ENCODE measurements at regions of chrX and their contacts with region 1.

Region 1: DNA sequence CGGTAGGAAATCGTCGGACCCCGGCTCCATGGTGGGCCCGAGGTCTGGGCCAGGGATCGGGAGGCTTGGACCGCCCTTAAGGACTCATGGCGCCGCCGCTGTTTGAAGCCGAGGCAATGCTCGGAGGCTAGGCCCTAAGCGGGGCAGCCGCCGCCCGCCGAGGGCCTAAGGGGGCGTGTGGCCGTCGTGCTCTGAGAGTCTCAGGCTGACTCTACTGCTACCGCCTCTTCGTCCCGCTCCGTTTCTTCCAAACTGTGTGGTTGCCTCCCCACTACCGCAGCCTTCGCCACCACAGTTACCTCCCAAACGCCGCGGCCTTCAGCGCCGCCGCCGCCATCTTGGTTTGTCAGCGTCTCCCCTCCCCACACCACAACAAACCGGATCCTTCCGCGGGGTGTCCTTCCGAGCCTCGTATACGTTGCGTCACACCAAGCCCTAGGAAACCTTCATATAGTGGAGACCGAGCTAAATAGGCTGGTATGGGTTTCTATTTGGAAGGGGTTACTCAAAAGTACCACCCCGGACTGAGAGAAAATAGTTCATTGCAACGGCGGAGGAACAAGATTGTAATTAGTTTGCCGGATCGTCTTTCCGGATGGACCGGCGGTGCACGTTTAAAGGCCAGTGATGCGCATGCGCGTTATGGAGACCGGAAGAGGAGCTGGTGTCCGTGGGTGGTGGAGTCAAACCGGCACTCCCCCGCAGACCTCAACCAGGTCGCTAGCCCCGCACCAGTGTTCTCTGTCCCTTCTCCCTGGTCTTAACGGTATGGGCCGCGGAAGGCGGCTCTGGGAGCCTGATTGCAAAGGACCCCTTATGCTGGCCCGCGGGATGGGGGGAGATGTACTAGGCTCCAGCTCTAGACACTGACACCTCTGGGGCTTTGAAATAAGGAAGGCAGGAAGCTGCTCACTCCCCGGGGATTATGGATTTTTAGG is at the start of gene KDM5C:
- DNase-seq: peak; percentile 68 to 94 (median 88)
- ATAC-seq: peak; percentile 74
- H3K4me3 ChIP-seq: peak within 1 kb of the TSS; percentile 98
- H3K4me3 Mint-ChIP-seq: peak within 1 kb of the TSS; percentile 100
- H3K27ac ChIP-seq: peak within 1 kb of the TSS; percentile 89 to 91
- H3K27ac Mint-ChIP-seq: peak within 1 kb of the TSS; percentile 95
- H3K4me1 ChIP-seq: peaks cover 32% of the 10 kb centered on the region
- H3K4me1 Mint-ChIP-seq: peaks cover 38% of the 10 kb centered on the region
- H3K27me3 ChIP-seq: no peaks in the 10 kb centered on the region
- H3K27me3 Mint-ChIP-seq: no peaks in the 10 kb centered on the region
- CTCF ChIP-seq: no peak
- total RNA-seq, gene KDM5C: 236 to 237 TPM

Region 2: GRCh38 chrX:52271206-52271605 is 953.9 kb before region 1 on chrX:
- CTCF ChIA-PET with region 1: no interaction called
- POLR2A ChIA-PET with region 1: no interaction called
- intact Hi-C with region 1: no loop called
- DNase-seq: peak in 3 of 14 experiments; percentile 7 to 22 (median 8)
- ATAC-seq: no peak
- H3K4me3 ChIP-seq: no peak overlapping the region
- H3K4me3 Mint-ChIP-seq: no peak overlapping the region
- H3K27ac ChIP-seq: no peak overlapping the region
- H3K27ac Mint-ChIP-seq: no peak overlapping the region
- H3K4me1 ChIP-seq: no peaks in the 10 kb centered on the region
- H3K4me1 Mint-ChIP-seq: no peaks in the 10 kb centered on the region
- H3K27me3 ChIP-seq: peaks cover 0 to 5% of the 10 kb centered on the region in 2 experiments
- H3K27me3 Mint-ChIP-seq: peaks cover 7% of the 10 kb centered on the region
- CTCF ChIP-seq: no peak

Region 3: GRCh38 chrX:53190363-53190960 is 34.7 kb before region 1 on chrX:
- CTCF ChIA-PET with region 1: no interaction called
- POLR2A ChIA-PET with region 1: interaction called, 5 read pairs
- intact Hi-C with region 1: loop called in 1 of 2 experiments (anchors 5 kb)
- DNase-seq: no peak
- ATAC-seq: peak; percentile 28
- H3K4me3 ChIP-seq: no peak overlapping the region
- H3K4me3 Mint-ChIP-seq: no peak overlapping the region
- H3K27ac ChIP-seq: no peak overlapping the region
- H3K27ac Mint-ChIP-seq: peak overlapping the region; percentile 42
- H3K4me1 ChIP-seq: no peaks in the 10 kb centered on the region
- H3K4me1 Mint-ChIP-seq: no peaks in the 10 kb centered on the region
- H3K27me3 ChIP-seq: no peaks in the 10 kb centered on the region
- H3K27me3 Mint-ChIP-seq: no peaks in the 10 kb centered on the region
- CTCF ChIP-seq: no peak